CD4-positive, alpha-beta T cell (primary cell): ENCODE measurements at regions of chr19 and their contacts with region 1.

Region 1: GRCh38 chr19:39532233-39533002 is at the start of gene EID2B:
- DNase-seq: peak; percentile 87 to 99 (median 94)
- ATAC-seq: peak; percentile 95
- H3K4me3 ChIP-seq: peak within 1 kb of the TSS; percentile 79
- H3K4me3 Mint-ChIP-seq: peak within 1 kb of the TSS; percentile 96
- H3K27ac ChIP-seq: peak within 1 kb of the TSS in 1 of 2 donors; percentile 74
- H3K27ac Mint-ChIP-seq: peak within 1 kb of the TSS; percentile 86
- H3K4me1 ChIP-seq: peaks cover 15% of the 10 kb centered on the region
- H3K4me1 Mint-ChIP-seq: peaks cover 39% of the 10 kb centered on the region
- H3K27me3 ChIP-seq: no peaks in the 10 kb centered on the region
- H3K27me3 Mint-ChIP-seq: no peaks in the 10 kb centered on the region
- CTCF ChIP-seq: peak; percentile 97
- total RNA-seq, gene EID2B: 5.0 to 5.1 TPM

Region 2: GRCh38 chr19:39125554-39126311 is 406.7 kb before region 1 on chr19 and contains the start of gene PAK4:
- CTCF ChIA-PET with region 1: interaction called, 4 read pairs
- POLR2A ChIA-PET with region 1: no interaction called
- intact Hi-C with region 1: loop called in 1 of 2 experiments (anchors 10 kb)
- DNase-seq: peak; percentile 89 to 98 (median 95)
- ATAC-seq: peak; percentile 91
- H3K4me3 ChIP-seq: peak within 1 kb of the TSS; percentile 58
- H3K4me3 Mint-ChIP-seq: peak within 1 kb of the TSS; percentile 93
- H3K27ac ChIP-seq: peak within 1 kb of the TSS; percentile 69 to 88
- H3K27ac Mint-ChIP-seq: peak within 1 kb of the TSS; percentile 92
- H3K4me1 ChIP-seq: peaks cover 30% of the 10 kb centered on the region
- H3K4me1 Mint-ChIP-seq: peaks cover 55% of the 10 kb centered on the region
- H3K27me3 ChIP-seq: no peaks in the 10 kb centered on the region
- H3K27me3 Mint-ChIP-seq: peaks cover 5% of the 10 kb centered on the region
- CTCF ChIP-seq: no peak
- total RNA-seq, gene PAK4: 2.7 to 6.3 TPM

Region 3: GRCh38 chr19:39390755-39391592 is 141.4 kb before region 1 on chr19 and contains the starts of genes MED29 and PAF1:
- CTCF ChIA-PET with region 1: no interaction called
- POLR2A ChIA-PET with region 1: interaction called, 3 read pairs
- intact Hi-C with region 1: loop called (anchors 5 kb)
- DNase-seq: peak; percentile 91 to 100 (median 94)
- ATAC-seq: peak; percentile 90
- H3K4me3 ChIP-seq: peak within 1 kb of the TSS; percentile 91
- H3K4me3 Mint-ChIP-seq: peak within 1 kb of the TSS; percentile 90
- H3K27ac ChIP-seq: peak within 1 kb of the TSS; percentile 98 to 100
- H3K27ac Mint-ChIP-seq: peak within 1 kb of the TSS; percentile 96
- H3K4me1 ChIP-seq: peaks cover 44% of the 10 kb centered on the region
- H3K4me1 Mint-ChIP-seq: peaks cover 33% of the 10 kb centered on the region
- H3K27me3 ChIP-seq: no peaks in the 10 kb centered on the region
- H3K27me3 Mint-ChIP-seq: no peaks in the 10 kb centered on the region
- CTCF ChIP-seq: no peak
- total RNA-seq, gene MED29: 45.0 to 46.1 TPM
- total RNA-seq, gene PAF1: 99.6 to 101 TPM

Region 4: GRCh38 chr19:39474139-39474622 is 58.2 kb before region 1 on chr19:
- CTCF ChIA-PET with region 1: interaction called, 17 read pairs
- POLR2A ChIA-PET with region 1: interaction called, 6 read pairs
- intact Hi-C with region 1: loop called (anchors 1 kb)
- DNase-seq: peak; percentile 65 to 85 (median 72)
- ATAC-seq: peak; percentile 85
- H3K4me3 ChIP-seq: no peak overlapping the region
- H3K4me3 Mint-ChIP-seq: no peak overlapping the region
- H3K27ac ChIP-seq: no peak overlapping the region
- H3K27ac Mint-ChIP-seq: peak overlapping the region; percentile 36
- H3K4me1 ChIP-seq: no peaks in the 10 kb centered on the region
- H3K4me1 Mint-ChIP-seq: no peaks in the 10 kb centered on the region
- H3K27me3 ChIP-seq: no peaks in the 10 kb centered on the region
- H3K27me3 Mint-ChIP-seq: no peaks in the 10 kb centered on the region
- CTCF ChIP-seq: peak; percentile 70